ENCODE measurements at regions of chr18 and their contacts with region 1.

Region 1: DNA sequence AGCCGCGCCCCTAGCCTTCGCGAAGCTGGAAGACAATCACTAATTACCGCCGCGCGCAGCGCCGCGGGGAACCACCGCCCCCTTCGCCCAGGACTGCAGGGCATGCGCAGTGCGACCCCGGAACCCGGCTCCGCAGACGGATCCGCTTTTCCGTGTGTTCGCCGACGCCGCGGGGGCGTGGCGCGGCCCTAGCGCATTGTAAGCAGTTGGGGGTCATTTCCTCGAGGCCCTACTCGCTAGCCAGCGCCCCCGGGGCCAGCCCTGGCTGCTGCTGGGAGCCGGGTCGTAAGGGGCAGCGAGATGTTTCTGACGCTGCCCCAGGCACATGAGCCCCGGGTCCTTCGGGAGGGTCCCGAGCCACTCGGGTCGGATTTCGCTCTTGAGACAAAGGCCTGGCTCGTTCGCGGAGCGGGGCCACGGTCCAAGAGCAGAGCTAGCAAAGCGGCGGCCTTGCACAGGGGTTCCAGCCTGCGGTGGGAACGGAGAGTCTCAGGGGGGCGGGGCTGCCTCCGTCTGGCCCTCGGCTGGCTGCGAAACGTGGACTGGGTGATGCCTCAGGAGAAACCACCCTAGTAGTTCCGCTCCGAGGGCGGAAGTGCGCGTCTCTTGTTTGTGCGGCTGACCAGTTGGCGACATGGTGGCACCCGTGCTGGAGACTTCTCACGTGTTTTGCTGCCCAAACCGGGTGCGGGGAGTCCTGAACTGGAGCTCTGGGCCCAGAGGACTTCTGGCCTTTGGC is at the starts of genes ELP2 and SLC39A6:
- DNase-seq: peak; percentile 94 to 99 (median 96)

Region 2: GRCh38 chr18:35497370-35498197 is 631.9 kb before region 1 on chr18 and contains the start of gene INO80C:
- intact Hi-C with region 1: loop called (anchors 5 kb)
- DNase-seq: peak; percentile 79 to 97 (median 84)

Region 3: GRCh38 chr18:35972197-35973052 is 157.0 kb before region 1 on chr18 and contains the start of gene RMP24:
- intact Hi-C with region 1: loop called (anchors 2 kb)
- DNase-seq: peak; percentile 89 to 99 (median 94)

Region 4: DNA sequence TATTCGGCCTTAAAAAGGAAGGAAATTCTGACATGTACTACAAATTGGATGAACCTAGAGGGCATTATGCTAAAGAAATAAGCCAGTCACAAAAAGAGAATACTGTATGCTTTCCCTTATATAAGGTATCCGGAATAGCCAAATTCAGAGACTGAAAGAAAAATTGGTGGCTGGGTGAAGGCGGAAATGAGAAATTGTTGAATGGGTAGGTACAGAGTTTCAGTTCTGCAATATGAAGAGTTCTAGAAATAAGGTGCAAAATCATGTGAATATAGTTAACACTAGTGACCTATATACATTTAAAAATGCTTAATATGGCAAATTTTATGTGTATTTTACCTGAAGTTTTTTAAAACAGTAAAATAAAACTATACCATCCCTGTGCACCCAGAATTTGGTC is 113.8 kb before region 1 on chr18:
- intact Hi-C with region 1: loop called (anchors 10 kb)
- DNase-seq: no peak

Region 5: GRCh38 chr18:36067055-36067957 is 62.2 kb before region 1 on chr18 and contains the start of gene RPRD1A:
- intact Hi-C with region 1: loop called (anchors 1 kb)
- DNase-seq: peak; percentile 96 to 99 (median 99)